Activated CD4-positive, alpha-beta memory T cell treated with anti-CD3 and anti-CD28 coated beads, Interleukin-2, amount 10 ng/mL, durations not matched to agents 7 days and 5 days (primary cell): ENCODE measurements at regions of chr9 and their contacts with region 1.

Region 1: GRCh38 chr9:98998441-98999151 is 54.9 kb downstream of the COL15A1 start:
- DNase-seq: peak; percentile 63
- H3K4me3 Mint-ChIP-seq: no peak overlapping the region
- H3K27ac Mint-ChIP-seq: no peak overlapping the region
- H3K4me1 Mint-ChIP-seq: peaks cover 24% of the 10 kb centered on the region
- H3K27me3 Mint-ChIP-seq: peaks cover 22% of the 10 kb centered on the region

Region 2: DNA sequence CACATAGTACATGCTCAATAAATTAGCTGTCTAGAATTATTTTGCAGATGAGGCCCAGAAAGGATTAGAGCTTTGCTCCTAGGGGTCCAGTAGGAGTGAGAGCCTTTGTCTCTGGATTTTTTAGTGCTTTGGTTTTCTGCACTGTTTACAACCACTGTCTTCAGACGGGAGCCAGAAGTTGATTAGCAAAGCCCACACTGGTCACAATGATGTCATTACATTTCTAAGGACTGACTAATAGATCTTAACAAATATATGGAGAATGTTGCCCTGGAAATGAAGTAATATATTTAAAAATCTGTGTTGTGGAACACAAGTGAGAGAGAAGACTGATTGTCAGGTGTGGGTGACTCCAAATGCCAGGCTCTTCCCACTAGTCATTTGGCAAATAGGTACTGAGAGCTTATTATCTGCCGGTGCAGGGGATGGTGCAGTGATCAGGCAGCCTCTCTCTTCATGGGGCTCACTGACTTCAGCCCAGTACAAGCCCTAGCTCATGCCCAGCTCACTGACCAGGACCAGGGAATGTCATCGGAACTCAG is 21.3 kb after region 1 on chr9:
- CTCF ChIA-PET with region 1: interaction called, 98 read pairs
- POLR2A ChIA-PET with region 1: no interaction called
- DNase-seq: no peak
- H3K4me3 Mint-ChIP-seq: no peak overlapping the region
- H3K27ac Mint-ChIP-seq: no peak overlapping the region
- H3K4me1 Mint-ChIP-seq: no peaks in the 10 kb centered on the region
- H3K27me3 Mint-ChIP-seq: peaks cover 7% of the 10 kb centered on the region

Region 3: GRCh38 chr9:99112750-99113413 is 114.3 kb after region 1 on chr9:
- CTCF ChIA-PET with region 1: interaction called, 15 read pairs
- POLR2A ChIA-PET with region 1: no interaction called
- DNase-seq: peak; percentile 44
- H3K4me3 Mint-ChIP-seq: peak overlapping the region; percentile 31
- H3K27ac Mint-ChIP-seq: peak overlapping the region; percentile 55
- H3K4me1 Mint-ChIP-seq: peaks cover 77% of the 10 kb centered on the region
- H3K27me3 Mint-ChIP-seq: no peaks in the 10 kb centered on the region

Region 4: DNA sequence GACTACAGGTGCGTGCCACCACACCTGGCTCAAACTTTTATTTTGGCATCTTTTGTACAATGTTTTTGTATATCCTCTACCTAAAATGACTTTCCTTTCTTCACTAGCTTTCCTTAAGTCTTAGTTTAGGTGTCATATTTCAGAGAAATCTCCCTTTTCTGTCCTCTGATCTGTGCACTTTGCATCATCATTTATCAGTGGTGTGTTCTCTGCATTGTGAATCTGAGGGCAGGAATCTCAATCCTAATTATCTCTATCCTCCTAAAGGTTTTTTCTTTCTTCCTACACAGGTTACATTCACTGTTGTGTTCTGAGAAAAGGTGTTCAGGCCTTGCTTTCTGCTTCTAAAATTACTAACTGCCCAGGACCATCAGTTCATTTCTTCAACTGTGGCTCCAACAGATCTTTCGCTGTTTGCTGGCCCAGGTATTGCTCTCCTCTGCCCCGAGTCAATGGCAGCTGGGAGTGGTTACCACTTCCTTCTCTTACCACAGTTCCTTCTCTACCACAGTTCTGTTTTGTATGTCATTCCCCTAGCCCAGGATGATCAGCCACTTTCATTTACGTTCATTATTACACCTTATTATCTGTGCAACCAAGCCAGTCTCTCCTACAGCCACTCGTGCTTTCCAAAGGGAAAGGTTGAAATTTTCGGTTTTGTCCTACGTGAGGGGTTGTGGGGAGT is 120.3 kb after region 1 on chr9:
- CTCF ChIA-PET with region 1: interaction called, 15 read pairs
- POLR2A ChIA-PET with region 1: no interaction called
- DNase-seq: peak; percentile 74
- H3K4me3 Mint-ChIP-seq: peak overlapping the region; percentile 62
- H3K27ac Mint-ChIP-seq: peak overlapping the region; percentile 91
- H3K4me1 Mint-ChIP-seq: peaks cover 66% of the 10 kb centered on the region
- H3K27me3 Mint-ChIP-seq: no peaks in the 10 kb centered on the region

Region 5: DNA sequence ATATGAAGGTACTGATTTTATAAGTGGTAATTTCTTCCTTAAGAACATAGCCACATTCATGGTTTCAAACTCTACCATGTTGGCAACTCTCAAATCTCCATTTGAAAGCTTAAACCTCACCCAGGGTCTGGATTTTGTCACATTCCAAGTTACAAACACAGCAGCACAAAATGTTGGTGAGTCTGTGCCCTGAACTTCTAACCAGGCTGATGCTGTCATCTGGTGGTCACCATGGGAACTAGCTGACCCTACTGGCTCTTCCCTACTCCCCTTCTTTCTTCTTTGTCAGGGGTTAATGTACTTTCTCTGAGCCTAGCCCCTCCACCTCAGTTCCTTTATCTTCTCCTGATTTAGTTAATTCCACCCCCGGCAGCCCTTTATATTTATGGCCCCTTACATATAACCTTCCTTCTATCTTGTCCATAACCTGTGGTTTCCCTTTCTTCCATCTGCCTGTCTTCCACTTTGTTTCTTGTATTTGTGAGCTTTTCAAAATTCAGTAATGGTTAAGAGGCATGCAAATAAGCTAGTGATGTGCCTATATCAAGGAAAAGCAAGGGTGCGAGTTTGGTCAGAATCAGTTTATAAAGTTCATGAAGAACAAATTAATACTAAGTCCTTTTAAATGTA is 142.2 kb after region 1 on chr9:
- CTCF ChIA-PET with region 1: interaction called, 208 read pairs
- POLR2A ChIA-PET with region 1: interaction called, 4 read pairs
- DNase-seq: peak; percentile 48
- H3K4me3 Mint-ChIP-seq: no peak overlapping the region
- H3K27ac Mint-ChIP-seq: no peak overlapping the region
- H3K4me1 Mint-ChIP-seq: peaks cover 31% of the 10 kb centered on the region
- H3K27me3 Mint-ChIP-seq: no peaks in the 10 kb centered on the region

Region 6: DNA sequence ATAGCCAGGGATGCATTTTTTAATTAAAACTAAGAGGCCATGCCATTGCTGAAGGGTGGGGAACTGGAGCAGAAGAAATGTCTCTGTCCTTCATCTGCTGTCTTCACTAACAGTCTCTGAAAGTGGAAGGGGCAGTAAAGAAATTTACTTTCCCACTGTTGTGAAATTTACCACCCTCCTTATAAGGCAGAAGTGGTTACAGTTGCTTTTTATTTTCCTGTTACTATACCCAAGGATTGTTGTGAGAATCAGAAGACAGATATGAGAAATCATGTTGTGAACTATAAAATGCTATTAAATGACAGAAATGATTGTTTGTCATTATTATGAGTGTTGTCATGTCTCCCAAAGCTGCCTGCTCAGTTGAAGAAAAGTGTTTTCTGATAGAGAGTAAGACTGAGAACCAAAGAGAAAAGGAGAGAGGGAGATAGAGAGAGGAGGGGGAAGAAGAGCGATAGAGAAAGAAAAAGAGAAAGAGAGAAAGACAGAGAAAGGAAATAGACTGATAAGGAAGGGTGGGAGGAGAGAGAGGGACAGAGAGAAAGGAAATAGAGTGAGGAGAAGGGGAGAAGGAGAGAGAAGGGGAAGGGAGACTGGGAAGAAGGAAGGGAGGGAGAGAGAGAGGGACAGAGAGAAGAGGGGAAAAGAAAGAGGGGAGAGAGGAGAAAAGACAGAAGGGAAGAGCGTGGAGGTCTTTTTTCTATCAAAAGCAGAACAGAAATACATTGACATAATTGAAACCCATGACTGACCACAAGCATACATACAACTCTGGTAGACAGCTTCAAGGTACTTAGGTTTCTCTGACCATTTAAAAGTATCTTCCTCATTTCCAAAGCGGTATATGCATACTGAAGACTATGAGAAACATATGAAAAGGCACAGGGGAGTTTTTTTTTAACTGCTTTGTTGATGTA is 246.0 kb after region 1 on chr9:
- CTCF ChIA-PET with region 1: no interaction called
- POLR2A ChIA-PET with region 1: no interaction called
- DNase-seq: no peak
- H3K4me3 Mint-ChIP-seq: no peak overlapping the region
- H3K27ac Mint-ChIP-seq: no peak overlapping the region
- H3K4me1 Mint-ChIP-seq: peaks cover 8% of the 10 kb centered on the region
- H3K27me3 Mint-ChIP-seq: no peaks in the 10 kb centered on the region